T-cell (primary cell): ENCODE measurements at regions of chr1 and their contacts with region 1.

Region 1: GRCh38 chr1:40248429-40248828 is 692 bp downstream of the TMCO2 start:
- DNase-seq: no peak
- ATAC-seq: no peak
- H3K4me3 ChIP-seq: no peak overlapping the region
- H3K4me3 Mint-ChIP-seq: no peak overlapping the region
- H3K27ac ChIP-seq: no peak overlapping the region
- H3K27ac Mint-ChIP-seq: no peak overlapping the region
- H3K4me1 ChIP-seq: no peaks in the 10 kb centered on the region
- H3K4me1 Mint-ChIP-seq: peaks cover 0 to 8% (median 5%) of the 10 kb centered on the region in 3 donors
- H3K27me3 ChIP-seq: no peaks in the 10 kb centered on the region
- H3K27me3 Mint-ChIP-seq: no peaks in the 10 kb centered on the region

Region 2: DNA sequence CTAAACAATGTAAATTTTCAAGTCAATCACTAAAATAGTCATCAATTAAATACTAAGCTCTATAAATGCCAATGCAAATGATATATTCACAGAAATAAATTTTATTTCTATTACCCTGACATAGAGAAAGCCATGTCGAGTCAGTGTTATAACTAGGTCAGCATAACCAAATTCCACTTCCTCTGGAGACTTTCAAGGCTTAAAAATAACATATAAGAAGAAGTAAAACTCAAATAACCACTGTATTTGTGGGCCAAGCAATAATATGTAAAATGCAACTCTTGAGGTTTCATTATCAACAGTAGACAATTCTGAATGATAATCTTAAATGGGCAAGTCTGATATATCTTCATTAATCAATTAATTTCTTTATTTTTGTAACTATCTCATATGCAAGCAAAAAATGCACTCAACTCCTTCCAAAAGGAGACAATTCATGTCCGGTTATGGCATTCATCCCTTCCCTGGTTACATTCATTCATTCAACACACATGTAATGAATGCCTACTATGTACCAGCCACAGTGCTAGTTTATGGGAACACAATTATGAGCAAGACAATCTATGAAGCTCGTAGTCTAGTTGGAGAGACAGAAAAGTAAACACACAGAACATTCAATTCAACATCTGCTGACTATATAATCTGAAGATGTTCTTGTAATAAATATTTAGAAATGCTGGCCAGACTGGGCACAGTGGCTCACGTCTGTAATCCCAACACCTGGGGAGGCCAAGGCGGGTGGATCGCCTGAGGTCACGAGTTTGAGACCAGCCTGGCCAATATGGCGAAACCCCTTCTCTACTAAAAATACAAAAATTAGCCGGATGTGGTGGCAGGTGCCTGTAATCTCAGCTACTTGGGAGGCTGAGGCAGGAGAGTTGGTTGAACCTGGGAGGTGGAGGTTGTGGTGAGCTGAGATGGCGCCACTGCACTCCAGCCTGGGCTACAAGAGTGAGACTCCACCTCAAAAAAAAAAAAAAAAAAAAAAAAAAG is 245.0 kb before region 1 on chr1:
- CTCF ChIA-PET with region 1: no interaction called
- POLR2A ChIA-PET with region 1: interaction called in 1 of 2 experiments, 11 read pairs
- DNase-seq: no peak
- ATAC-seq: no peak
- H3K4me3 ChIP-seq: no peak overlapping the region
- H3K4me3 Mint-ChIP-seq: no peak overlapping the region
- H3K27ac ChIP-seq: no peak overlapping the region
- H3K27ac Mint-ChIP-seq: peak overlapping the region in 1 of 2 donors; percentile 72
- H3K4me1 ChIP-seq: peaks cover 0 to 4% of the 10 kb centered on the region in 2 experiments
- H3K4me1 Mint-ChIP-seq: peaks cover 0 to 19% (median 5%) of the 10 kb centered on the region in 3 donors
- H3K27me3 ChIP-seq: no peaks in the 10 kb centered on the region
- H3K27me3 Mint-ChIP-seq: no peaks in the 10 kb centered on the region